ENCODE measurements at regions of chr22 and their contacts with region 1.

Region 1: GRCh38 chr22:28829358-28830181 is 29.2 kb upstream of the XBP1 start:
- DNase-seq: peak; percentile 70 to 90
- ATAC-seq: peak; percentile 84 to 92 (median 90)
- H3K4me3 ChIP-seq: no peak overlapping the region
- H3K4me3 Mint-ChIP-seq: peak overlapping the region; percentile 70
- H3K27ac ChIP-seq: no peak overlapping the region
- H3K27ac Mint-ChIP-seq: peak overlapping the region; percentile 21 to 56
- H3K4me1 ChIP-seq: peaks cover 40% of the 10 kb centered on the region
- H3K4me1 Mint-ChIP-seq: peaks cover 41 to 53% of the 10 kb centered on the region in 2 donors
- H3K27me3 ChIP-seq: no peaks in the 10 kb centered on the region
- H3K27me3 Mint-ChIP-seq: peaks cover 0 to 3% of the 10 kb centered on the region in 2 donors
- CTCF ChIP-seq: peak; percentile 99

Region 2: GRCh38 chr22:28464167-28464566 is 365.4 kb before region 1 on chr22:
- intact Hi-C with region 1: no loop called
- DNase-seq: no peak
- ATAC-seq: no peak
- H3K4me3 ChIP-seq: no peak overlapping the region
- H3K4me3 Mint-ChIP-seq: no peak overlapping the region
- H3K27ac ChIP-seq: no peak overlapping the region
- H3K27ac Mint-ChIP-seq: no peak overlapping the region
- H3K4me1 ChIP-seq: no peaks in the 10 kb centered on the region
- H3K4me1 Mint-ChIP-seq: no peaks in the 10 kb centered on the region
- H3K27me3 ChIP-seq: no peaks in the 10 kb centered on the region
- H3K27me3 Mint-ChIP-seq: peaks cover 2 to 19% of the 10 kb centered on the region in 2 donors
- CTCF ChIP-seq: no peak

Region 3: DNA sequence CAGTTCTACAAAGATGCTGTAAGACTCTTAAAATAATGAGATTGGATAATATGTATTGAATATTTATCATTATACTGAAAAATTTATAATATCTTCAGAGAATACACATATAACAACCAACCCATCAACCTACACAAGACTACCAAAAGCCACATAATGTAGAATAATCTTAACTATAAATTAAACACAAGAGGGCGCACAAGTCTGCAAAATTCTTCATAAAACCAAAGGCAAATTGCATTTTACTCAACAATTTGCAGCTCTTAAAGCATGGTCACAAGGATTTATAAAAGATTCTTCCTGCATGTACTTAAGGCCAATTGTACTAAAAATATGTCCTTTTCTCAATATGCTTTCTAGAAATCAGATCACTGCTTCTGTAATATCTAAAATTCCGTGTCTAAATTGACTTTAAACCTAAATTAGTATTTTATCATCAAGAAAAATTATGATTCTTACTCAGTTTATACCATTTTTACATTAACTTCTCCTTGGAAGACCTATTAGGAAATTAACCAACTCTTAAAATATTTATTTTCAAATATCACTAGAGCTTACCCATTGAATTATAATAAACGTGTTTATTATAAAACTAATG is 228.9 kb before region 1 on chr22:
- intact Hi-C with region 1: loop called (anchors 1 kb)
- DNase-seq: peak in 1 of 2 donors; percentile 73
- ATAC-seq: peak in 2 of 3 donors; percentile 34 to 53
- H3K4me3 ChIP-seq: no peak overlapping the region
- H3K4me3 Mint-ChIP-seq: no peak overlapping the region
- H3K27ac ChIP-seq: no peak overlapping the region
- H3K27ac Mint-ChIP-seq: no peak overlapping the region
- H3K4me1 ChIP-seq: no peaks in the 10 kb centered on the region
- H3K4me1 Mint-ChIP-seq: no peaks in the 10 kb centered on the region
- H3K27me3 ChIP-seq: peaks cover 2% of the 10 kb centered on the region
- H3K27me3 Mint-ChIP-seq: peaks cover 9 to 11% of the 10 kb centered on the region in 2 donors
- CTCF ChIP-seq: peak; percentile 78

Region 4: DNA sequence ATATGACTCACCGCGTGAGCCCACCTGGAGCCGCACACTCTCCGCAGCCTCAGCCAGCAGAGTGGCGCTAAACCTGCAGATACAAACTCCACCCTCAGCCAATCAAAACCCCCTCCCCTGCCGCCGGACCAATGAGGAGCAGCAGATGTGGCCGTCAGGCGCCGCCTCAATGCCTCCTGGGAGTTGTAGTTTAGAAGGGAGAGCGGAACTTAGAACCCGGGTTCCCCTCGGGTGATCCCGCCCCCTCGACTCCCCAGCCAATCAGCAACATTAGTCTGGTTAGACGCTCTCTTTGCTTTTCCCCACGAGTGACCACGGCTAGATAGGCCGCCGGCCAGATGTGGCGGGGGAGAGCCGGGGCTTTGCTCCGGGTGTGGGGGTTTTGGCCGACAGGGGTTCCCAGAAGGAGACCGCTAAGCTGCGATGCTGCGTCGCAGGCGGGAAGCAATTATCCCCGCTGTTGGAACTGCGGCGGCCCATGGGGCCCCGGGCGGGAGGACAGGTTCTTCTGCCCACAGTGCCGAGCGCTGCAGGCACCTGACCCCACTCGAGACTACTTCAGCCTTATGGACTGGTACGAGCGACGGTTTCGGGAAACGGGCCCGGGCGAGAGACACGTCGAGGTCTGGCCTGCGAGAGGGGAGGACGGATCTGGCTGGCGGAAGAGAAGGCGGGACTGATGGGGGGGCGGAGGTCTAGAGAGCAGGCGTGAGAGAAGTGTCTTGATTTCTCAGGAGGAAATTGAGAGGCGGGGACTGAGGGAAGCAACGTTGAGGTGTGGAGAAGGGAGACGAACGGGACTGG is 87.6 kb before region 1 on chr22 and contains the starts of genes CHEK2 and HSCB:
- intact Hi-C with region 1: loop called (anchors 2 kb)
- DNase-seq: peak; percentile 91 to 98
- ATAC-seq: peak; percentile 94 to 98 (median 95)
- H3K4me3 ChIP-seq: peak within 1 kb of the TSS; percentile 74
- H3K4me3 Mint-ChIP-seq: peak within 1 kb of the TSS; percentile 89
- H3K27ac ChIP-seq: peak within 1 kb of the TSS; percentile 91
- H3K27ac Mint-ChIP-seq: peak within 1 kb of the TSS; percentile 92 to 97
- H3K4me1 ChIP-seq: peaks cover 22% of the 10 kb centered on the region
- H3K4me1 Mint-ChIP-seq: peaks cover 32 to 33% of the 10 kb centered on the region in 2 donors
- H3K27me3 ChIP-seq: no peaks in the 10 kb centered on the region
- H3K27me3 Mint-ChIP-seq: no peaks in the 10 kb centered on the region
- CTCF ChIP-seq: no peak
- total RNA-seq, gene CHEK2: 10.4 to 11.8 (median 11.4) TPM
- total RNA-seq, gene HSCB: 11.4 to 13.6 (median 12.3) TPM

Region 5: DNA sequence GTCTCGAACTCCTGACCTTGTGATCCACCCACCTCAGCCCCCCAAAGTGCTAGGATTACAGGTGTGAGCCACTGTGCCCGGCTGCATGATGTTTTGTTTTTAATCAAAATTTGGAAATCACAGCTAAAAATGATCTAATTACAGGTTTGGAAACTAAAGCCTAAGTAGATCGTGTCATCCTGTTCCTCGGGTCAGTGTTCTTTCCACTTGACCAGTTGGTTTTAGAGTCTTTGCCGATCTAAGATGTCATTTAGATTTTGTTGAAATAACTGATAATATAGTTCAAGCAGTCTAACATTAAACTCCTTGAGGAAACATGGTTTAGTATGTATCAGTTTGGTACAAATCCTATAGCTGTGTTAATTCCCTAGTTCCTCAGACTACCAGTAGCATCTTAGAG is 38.9 kb before region 1 on chr22:
- intact Hi-C with region 1: loop called (anchors 1 kb)
- DNase-seq: no peak
- ATAC-seq: no peak
- H3K4me3 ChIP-seq: no peak overlapping the region
- H3K4me3 Mint-ChIP-seq: peak overlapping the region; percentile 52
- H3K27ac ChIP-seq: peak overlapping the region; percentile 49
- H3K27ac Mint-ChIP-seq: peak overlapping the region; percentile 92 to 96
- H3K4me1 ChIP-seq: peaks cover 46% of the 10 kb centered on the region
- H3K4me1 Mint-ChIP-seq: peaks cover 58 to 68% of the 10 kb centered on the region in 2 donors
- H3K27me3 ChIP-seq: no peaks in the 10 kb centered on the region
- H3K27me3 Mint-ChIP-seq: no peaks in the 10 kb centered on the region
- CTCF ChIP-seq: no peak

Region 6: GRCh38 chr22:28800308-28801077 is 29.1 kb before region 1 on chr22 and contains the start of gene XBP1:
- intact Hi-C with region 1: loop called (anchors 2 kb)
- DNase-seq: peak; percentile 95 to 97
- ATAC-seq: peak; percentile 83 to 95 (median 92)
- H3K4me3 ChIP-seq: peak within 1 kb of the TSS; percentile 69
- H3K4me3 Mint-ChIP-seq: peak within 1 kb of the TSS; percentile 93
- H3K27ac ChIP-seq: peak within 1 kb of the TSS; percentile 92
- H3K27ac Mint-ChIP-seq: peak within 1 kb of the TSS; percentile 92 to 96
- H3K4me1 ChIP-seq: peaks cover 40% of the 10 kb centered on the region
- H3K4me1 Mint-ChIP-seq: peaks cover 56 to 58% of the 10 kb centered on the region in 2 donors
- H3K27me3 ChIP-seq: no peaks in the 10 kb centered on the region
- H3K27me3 Mint-ChIP-seq: no peaks in the 10 kb centered on the region
- CTCF ChIP-seq: no peak
- total RNA-seq, gene XBP1: 221 to 240 (median 224) TPM

Region 7: DNA sequence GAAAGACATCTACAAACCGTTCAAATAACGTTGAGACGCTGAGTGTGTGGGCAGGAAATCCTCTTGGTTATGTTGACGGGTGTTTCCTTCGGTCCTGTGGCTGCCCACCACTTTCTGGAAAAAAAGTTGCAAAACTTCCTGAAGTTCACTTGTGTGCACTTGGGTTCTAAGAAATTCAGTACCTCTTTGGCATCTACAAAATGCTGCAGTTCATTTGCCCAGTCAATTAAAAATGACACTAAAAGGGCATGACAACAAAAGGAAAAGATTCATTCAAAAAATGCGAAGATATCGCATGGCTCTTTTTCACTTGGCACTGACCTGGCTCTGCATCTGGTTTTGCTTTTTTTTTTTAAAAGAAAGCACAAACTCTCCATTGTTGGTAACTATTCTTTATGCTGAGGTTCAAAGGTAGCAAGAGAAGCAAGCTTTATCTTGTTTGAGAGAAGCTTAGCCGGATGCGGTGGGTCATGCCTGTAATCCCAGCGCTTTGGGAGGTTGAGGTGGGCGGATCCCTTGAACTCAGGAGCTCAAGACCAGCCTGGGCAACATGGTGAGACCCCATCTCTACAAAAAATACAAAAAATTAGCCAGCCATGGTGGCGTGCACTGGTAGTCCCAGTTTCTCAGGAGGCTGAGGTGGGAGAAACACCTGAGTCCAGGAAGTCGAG is 18.6 kb before region 1 on chr22:
- intact Hi-C with region 1: loop called (anchors 2 kb)
- DNase-seq: peak; percentile 36 to 72
- ATAC-seq: peak; percentile 17 to 46 (median 27)
- H3K4me3 ChIP-seq: peak overlapping the region; percentile 13
- H3K4me3 Mint-ChIP-seq: peak overlapping the region; percentile 90
- H3K27ac ChIP-seq: peak overlapping the region; percentile 57
- H3K27ac Mint-ChIP-seq: peak overlapping the region; percentile 91 to 93
- H3K4me1 ChIP-seq: peaks cover 68% of the 10 kb centered on the region
- H3K4me1 Mint-ChIP-seq: peaks cover 69 to 72% of the 10 kb centered on the region in 2 donors
- H3K27me3 ChIP-seq: no peaks in the 10 kb centered on the region
- H3K27me3 Mint-ChIP-seq: no peaks in the 10 kb centered on the region
- CTCF ChIP-seq: no peak

Measured in natural killer cell (primary cell).